Activated CD8-positive, alpha-beta T cell treated with anti-CD3 and anti-CD28 coated beads, Interleukin-2, amount 10 ng/mL, durations not matched to agents 7 days and 5 days (primary cell): ENCODE measurements at regions of chr12 and their contacts with region 1.

Region 1: GRCh38 chr12:107402041-107403022 is 283.3 kb upstream of the PWP1 start:
- DNase-seq: peak; percentile 79
- ATAC-seq: peak; percentile 71
- H3K4me3 Mint-ChIP-seq: no peak overlapping the region
- H3K27ac Mint-ChIP-seq: peak overlapping the region; percentile 39
- H3K4me1 Mint-ChIP-seq: peaks cover 55% of the 10 kb centered on the region
- H3K27me3 Mint-ChIP-seq: no peaks in the 10 kb centered on the region

Region 2: DNA sequence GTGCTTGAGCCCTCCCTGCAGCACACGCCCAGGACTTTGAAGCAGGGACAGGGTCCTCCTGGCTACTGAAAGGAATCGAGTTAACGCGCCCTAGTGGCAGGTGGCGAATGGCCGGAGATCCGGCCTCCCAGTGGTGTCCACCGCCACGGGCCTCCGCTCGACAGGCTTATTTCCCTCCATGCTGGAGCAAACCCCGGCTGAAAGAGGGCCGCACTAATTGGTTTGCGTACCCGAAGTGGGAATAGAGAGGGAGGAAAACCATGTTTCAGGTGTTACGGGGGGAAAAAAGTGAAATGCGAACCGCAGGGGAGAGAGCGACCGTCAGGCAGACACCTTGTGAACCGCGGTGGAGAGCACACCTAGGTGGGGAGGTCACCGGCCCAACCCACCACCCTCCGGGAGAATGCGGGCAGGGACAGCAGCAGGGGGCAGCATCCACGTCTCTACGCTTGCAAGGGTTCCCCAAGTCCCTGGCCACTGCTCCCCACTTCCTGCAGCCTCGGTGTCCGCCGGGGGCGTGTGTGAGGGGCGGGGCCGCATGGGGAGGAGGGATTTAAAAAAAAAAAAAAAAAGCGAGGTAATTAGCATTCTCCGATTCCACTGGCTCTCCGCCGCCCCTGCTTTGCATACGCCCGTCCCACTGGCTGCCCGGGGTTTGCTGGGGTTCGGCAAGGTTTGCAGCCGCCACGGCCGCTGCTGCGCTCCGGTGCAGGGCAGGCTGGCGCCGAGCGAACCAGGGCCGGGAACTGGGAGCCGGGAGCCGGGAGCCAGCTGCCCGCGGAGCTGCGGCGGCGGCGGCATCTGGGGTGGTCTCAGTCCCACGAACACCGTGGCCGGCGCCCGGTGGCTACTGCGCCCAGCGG is 84.3 kb before region 1 on chr12:
- CTCF ChIA-PET with region 1: interaction called, 182 read pairs
- POLR2A ChIA-PET with region 1: interaction called, 43 read pairs
- DNase-seq: peak; percentile 95
- ATAC-seq: peak; percentile 77
- H3K4me3 Mint-ChIP-seq: peak overlapping the region; percentile 88
- H3K27ac Mint-ChIP-seq: peak overlapping the region; percentile 18
- H3K4me1 Mint-ChIP-seq: peaks cover 34% of the 10 kb centered on the region
- H3K27me3 Mint-ChIP-seq: peaks cover 32% of the 10 kb centered on the region

Region 3: DNA sequence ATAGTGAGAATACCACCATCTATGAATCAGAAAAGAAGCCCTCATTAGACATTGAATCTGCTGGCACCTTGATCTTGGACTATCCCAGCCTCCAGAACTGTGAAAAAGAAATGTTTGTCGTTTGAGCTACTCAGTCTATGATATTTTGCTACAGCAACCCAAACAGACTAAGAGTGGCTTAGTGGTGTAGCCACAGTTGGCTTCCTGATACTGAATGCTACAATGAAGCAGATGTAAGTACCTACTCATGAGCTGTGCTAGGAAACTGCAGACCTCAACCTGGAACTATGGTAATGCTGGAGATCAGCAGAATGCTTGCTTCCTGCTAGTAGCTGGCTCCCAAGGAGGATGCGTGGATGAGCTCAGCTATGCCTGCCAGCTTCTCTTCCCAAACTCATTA is 40.4 kb before region 1 on chr12:
- CTCF ChIA-PET with region 1: interaction called, 23 read pairs
- POLR2A ChIA-PET with region 1: no interaction called
- DNase-seq: peak; percentile 46
- ATAC-seq: peak; percentile 70
- H3K4me3 Mint-ChIP-seq: no peak overlapping the region
- H3K27ac Mint-ChIP-seq: peak overlapping the region; percentile 8
- H3K4me1 Mint-ChIP-seq: peaks cover 69% of the 10 kb centered on the region
- H3K27me3 Mint-ChIP-seq: no peaks in the 10 kb centered on the region

Region 4: DNA sequence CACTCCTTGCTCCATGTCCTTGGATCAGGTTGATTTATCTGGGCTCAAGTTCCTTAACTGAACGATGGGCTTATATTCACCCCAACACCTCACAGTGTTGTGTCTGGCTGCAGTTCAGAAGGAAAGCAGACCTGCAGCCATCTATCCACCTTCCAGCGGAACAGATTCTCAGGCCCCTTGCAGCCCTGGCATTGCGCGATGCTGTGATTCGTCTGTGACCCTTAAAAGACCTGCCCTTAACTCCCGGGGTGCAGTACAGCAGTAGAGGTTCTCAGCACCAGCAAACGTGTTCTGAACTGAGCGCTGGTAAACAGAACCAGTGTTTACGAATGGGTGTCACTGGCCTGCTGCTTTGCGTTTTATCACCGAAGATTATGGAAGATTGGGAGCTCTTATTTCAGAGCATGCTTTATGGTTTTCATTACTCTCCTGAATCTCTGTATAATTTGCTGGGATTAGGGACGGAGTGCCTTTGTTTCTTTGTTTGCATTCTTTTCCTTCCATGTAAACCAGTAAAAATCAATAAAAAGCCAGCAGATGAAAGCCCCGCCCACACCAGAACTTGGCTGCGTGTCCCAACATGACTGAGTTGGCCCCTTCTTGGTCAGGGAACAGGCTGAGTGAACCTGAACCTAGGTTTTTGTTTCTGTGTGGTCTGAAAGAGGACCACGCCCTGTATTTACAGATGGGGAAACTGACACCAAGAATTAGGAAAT is 22.3 kb before region 1 on chr12:
- CTCF ChIA-PET with region 1: interaction called, 51 read pairs
- POLR2A ChIA-PET with region 1: no interaction called
- DNase-seq: no peak
- ATAC-seq: no peak
- H3K4me3 Mint-ChIP-seq: no peak overlapping the region
- H3K27ac Mint-ChIP-seq: no peak overlapping the region
- H3K4me1 Mint-ChIP-seq: peaks cover 20% of the 10 kb centered on the region
- H3K27me3 Mint-ChIP-seq: no peaks in the 10 kb centered on the region

Region 5: GRCh38 chr12:107423531-107423930 is 21.2 kb after region 1 on chr12:
- CTCF ChIA-PET with region 1: no interaction called
- POLR2A ChIA-PET with region 1: no interaction called
- DNase-seq: no peak
- ATAC-seq: no peak
- H3K4me3 Mint-ChIP-seq: no peak overlapping the region
- H3K27ac Mint-ChIP-seq: no peak overlapping the region
- H3K4me1 Mint-ChIP-seq: no peaks in the 10 kb centered on the region
- H3K27me3 Mint-ChIP-seq: no peaks in the 10 kb centered on the region

Region 6: DNA sequence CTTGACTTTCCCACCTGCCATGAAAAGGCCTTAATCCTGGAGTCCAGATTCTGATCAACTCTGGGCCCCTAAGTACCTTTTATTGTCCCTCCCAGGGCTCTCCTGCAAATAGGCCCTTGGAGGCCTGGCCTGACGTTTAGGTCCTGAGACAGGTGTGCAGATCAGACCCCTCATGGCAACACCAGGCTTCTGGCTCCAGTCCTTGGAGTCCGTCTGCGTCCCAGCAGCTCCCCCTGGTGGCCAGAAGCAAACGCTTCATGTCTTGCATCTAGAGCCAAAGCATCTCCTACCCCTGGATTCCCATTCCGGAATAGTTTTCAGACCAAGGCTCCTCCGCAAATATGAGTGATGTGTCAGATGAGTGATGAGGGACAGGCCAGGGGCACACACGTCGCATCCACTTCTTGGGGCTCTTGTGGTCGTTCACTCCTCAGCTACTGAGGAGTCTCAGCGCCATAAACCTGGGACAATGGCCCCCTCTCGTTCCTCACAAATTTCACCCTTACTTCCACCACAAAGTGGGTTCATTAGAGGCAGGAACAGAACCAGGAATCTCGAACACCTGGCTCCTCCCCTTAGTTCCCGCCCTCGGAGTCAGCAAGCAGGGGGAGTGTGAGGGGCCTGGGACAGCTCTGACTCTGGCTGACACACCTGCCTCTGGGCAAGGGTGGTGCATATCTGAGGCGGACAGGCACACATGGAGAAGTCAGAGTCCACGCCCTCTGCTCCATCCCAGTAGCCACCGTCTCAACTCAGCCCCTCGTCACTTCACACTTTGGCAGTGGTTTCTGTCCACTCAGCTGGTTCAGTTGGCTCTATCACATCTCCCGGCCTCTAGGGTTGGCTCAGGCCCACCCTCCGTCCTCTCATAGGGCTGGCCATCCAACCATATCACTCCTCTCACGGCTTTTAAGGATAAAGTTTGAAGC is 205.4 kb after region 1 on chr12:
- CTCF ChIA-PET with region 1: interaction called, 20 read pairs
- POLR2A ChIA-PET with region 1: no interaction called
- DNase-seq: peak; percentile 84
- ATAC-seq: peak; percentile 76
- H3K4me3 Mint-ChIP-seq: no peak overlapping the region
- H3K27ac Mint-ChIP-seq: no peak overlapping the region
- H3K4me1 Mint-ChIP-seq: no peaks in the 10 kb centered on the region
- H3K27me3 Mint-ChIP-seq: no peaks in the 10 kb centered on the region